Esophagus muscularis mucosa (tissue), 4 donors: ENCODE measurements at regions of chr5 and their contacts with region 1.

Region 1: DNA sequence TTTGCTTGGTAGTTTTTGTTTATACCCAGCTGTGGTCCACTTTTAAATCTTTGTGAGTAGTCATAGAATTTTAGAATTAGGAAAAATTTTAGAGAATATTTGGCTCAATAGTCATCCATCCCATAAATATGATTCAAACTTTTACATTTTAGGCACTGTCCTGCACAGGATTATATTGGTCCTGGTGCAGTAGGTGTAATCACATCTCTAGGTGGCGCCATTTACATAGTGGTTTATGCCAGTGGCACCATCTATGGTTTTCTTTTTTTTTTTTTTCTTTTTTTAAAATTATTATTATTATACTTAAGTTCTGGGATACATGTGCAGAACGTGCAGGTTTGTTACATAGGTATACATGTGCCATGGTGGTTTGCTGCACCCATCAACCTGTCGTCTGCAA is 260.7 kb upstream of the KCNN2 start:
- DNase-seq: no peak
- H3K4me3 ChIP-seq: no peak overlapping the region
- H3K27ac ChIP-seq: no peak overlapping the region
- H3K4me1 ChIP-seq: no peaks in the 10 kb centered on the region
- H3K27me3 ChIP-seq: no peaks in the 10 kb centered on the region
- CTCF ChIP-seq: peak; percentile 41 to 65 (median 57)
- EP300 ChIP-seq: no peak
- POLR2A ChIP-seq: no peak

Region 2: DNA sequence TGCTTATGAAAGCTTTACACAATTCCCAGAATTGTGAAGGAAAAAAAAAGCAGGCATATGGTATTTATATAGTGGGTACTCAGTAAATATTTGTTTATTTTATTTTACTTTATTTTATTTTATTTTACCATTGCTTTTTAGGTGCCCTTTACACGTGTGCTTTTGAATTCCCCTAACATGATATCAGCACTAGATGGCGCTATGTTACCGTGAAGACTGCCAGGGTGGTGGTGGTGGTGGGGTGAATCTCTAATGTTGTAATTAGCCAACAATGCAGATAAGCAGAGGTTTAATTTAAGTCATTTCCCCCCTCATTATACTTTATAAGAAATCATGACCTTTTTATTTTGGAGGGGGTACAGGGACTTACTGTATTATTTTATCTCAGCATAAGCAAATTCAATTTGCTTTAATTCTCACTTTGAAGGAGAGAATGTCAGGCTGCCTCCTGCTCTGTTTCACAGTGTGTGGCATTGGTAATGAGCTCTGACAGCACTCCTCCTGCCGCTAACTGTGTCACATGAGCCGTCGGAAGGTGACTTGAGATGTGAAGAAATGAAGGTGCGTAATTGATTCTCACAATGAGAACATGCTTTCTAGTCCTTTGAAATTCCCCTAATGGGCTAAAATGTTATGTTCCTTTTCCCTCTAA is 422.1 kb before region 1 on chr5:
- intact Hi-C with region 1: loop called (anchors 10 kb)
- DNase-seq: no peak
- H3K4me3 ChIP-seq: no peak overlapping the region
- H3K27ac ChIP-seq: no peak overlapping the region
- H3K4me1 ChIP-seq: peaks cover 0 to 10% (median 4%) of the 10 kb centered on the region in 4 donors
- H3K27me3 ChIP-seq: no peaks in the 10 kb centered on the region
- CTCF ChIP-seq: peak; percentile 73 to 79 (median 74)
- EP300 ChIP-seq: no peak
- POLR2A ChIP-seq: no peak

Region 3: DNA sequence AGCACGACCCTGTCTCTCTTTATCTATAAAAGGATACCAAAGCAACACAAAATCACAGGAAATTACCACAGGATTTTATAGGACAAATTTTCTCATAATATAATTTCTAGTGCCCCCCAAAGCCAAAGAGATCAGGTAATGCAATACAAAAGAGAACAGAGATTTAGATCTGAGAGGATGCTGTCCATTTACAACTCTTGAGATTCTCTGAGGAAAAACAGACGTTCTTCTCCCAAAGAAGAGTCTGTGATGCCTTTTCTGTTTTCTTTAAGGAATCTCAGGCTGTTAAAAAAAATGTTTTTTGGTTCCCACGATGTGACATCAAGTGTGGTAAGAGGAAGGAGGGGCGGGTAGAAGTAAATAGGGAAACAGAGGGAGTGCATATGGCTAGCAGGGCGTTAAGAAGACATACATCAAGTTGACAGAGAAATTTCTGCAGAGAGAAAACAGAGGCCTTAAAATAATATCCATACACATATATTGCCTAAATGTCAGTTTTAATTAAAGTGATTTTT is 313.0 kb before region 1 on chr5:
- intact Hi-C with region 1: no loop called
- DNase-seq: no peak
- H3K4me3 ChIP-seq: no peak overlapping the region
- H3K27ac ChIP-seq: no peak overlapping the region
- H3K4me1 ChIP-seq: no peaks in the 10 kb centered on the region
- H3K27me3 ChIP-seq: no peaks in the 10 kb centered on the region
- CTCF ChIP-seq: no peak
- EP300 ChIP-seq: no peak
- POLR2A ChIP-seq: no peak

Region 4: GRCh38 chr5:114305402-114306211 is 204.5 kb after region 1 on chr5:
- intact Hi-C with region 1: loop called (anchors 5 kb)
- DNase-seq: no peak
- H3K4me3 ChIP-seq: no peak overlapping the region
- H3K27ac ChIP-seq: no peak overlapping the region
- H3K4me1 ChIP-seq: no peaks in the 10 kb centered on the region
- H3K27me3 ChIP-seq: no peaks in the 10 kb centered on the region
- CTCF ChIP-seq: peak; percentile 31 to 50 (median 42)
- EP300 ChIP-seq: no peak
- POLR2A ChIP-seq: no peak